ENCODE measurements at regions of chr4 and their contacts with region 1.

Region 1: GRCh38 chr4:7101692-7102515 is 34.0 kb upstream of the GRPEL1 start:
- DNase-seq: peak; percentile 56 to 66 (median 62)
- H3K4me3 ChIP-seq: peak overlapping the region; percentile 2 to 84 (median 21)
- H3K4me3 Mint-ChIP-seq: peak overlapping the region; percentile 88 to 95
- H3K27ac ChIP-seq: peak overlapping the region in 1 of 2 donors; percentile 9
- H3K27ac Mint-ChIP-seq: peak overlapping the region in 1 of 7 donors; percentile 64
- H3K4me1 ChIP-seq: peaks cover 22 to 26% of the 10 kb centered on the region in 2 donors
- H3K4me1 Mint-ChIP-seq: peaks cover 25% of the 10 kb centered on the region
- H3K27me3 ChIP-seq: peaks cover 0 to 21% of the 10 kb centered on the region in 2 donors
- H3K27me3 Mint-ChIP-seq: peaks cover 21 to 39% (median 35%) of the 10 kb centered on the region in 3 donors
- CTCF ChIP-seq: peak; percentile 83

Region 2: GRCh38 chr4:6574747-6575502 is 527.0 kb before region 1 on chr4 and contains the start of gene MAN2B2:
- intact Hi-C with region 1: loop called in 1 of 2 experiments (anchors 10 kb)
- DNase-seq: peak; percentile 59 to 66 (median 64)
- H3K4me3 ChIP-seq: peak within 1 kb of the TSS; percentile 85 to 97 (median 94)
- H3K4me3 Mint-ChIP-seq: peak within 1 kb of the TSS; percentile 87 to 92
- H3K27ac ChIP-seq: peak within 1 kb of the TSS; percentile 11 to 88
- H3K27ac Mint-ChIP-seq: peak within 1 kb of the TSS; percentile 25 to 90 (median 74)
- H3K4me1 ChIP-seq: peaks cover 13 to 18% of the 10 kb centered on the region in 2 donors
- H3K4me1 Mint-ChIP-seq: peaks cover 17% of the 10 kb centered on the region
- H3K27me3 ChIP-seq: peaks cover 0 to 24% of the 10 kb centered on the region in 2 donors
- H3K27me3 Mint-ChIP-seq: peaks cover 9 to 31% (median 23%) of the 10 kb centered on the region in 3 donors
- CTCF ChIP-seq: no peak
- polyA plus RNA-seq, gene MAN2B2: 9.6 to 28.4 (median 10.6) TPM

Region 3: DNA sequence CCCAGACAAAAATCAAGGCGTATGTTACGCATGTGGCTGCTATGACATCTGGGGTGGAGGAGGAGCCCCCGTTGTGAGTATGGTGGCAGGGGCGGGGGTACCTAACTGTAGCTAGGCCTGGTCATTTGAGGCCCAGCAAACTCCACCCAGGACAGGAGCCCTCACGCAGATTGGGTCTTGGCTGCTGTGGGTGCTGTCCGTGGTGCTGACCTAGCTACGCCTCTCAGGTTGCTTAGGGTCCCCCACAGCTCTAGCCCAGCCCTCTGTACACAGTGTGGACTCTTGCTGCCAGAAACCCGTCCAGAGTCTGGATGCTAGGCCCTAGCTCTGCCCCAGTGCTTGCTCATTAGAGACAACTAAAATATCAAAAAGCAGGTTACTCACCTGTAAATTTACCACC is 479.6 kb after region 1 on chr4:
- intact Hi-C with region 1: no loop called
- DNase-seq: no peak
- H3K4me3 ChIP-seq: no peak overlapping the region
- H3K4me3 Mint-ChIP-seq: no peak overlapping the region
- H3K27ac ChIP-seq: no peak overlapping the region
- H3K27ac Mint-ChIP-seq: no peak overlapping the region
- H3K4me1 ChIP-seq: no peaks in the 10 kb centered on the region
- H3K4me1 Mint-ChIP-seq: no peaks in the 10 kb centered on the region
- H3K27me3 ChIP-seq: no peaks in the 10 kb centered on the region
- H3K27me3 Mint-ChIP-seq: peaks cover 2 to 4% (median 3%) of the 10 kb centered on the region in 3 donors
- CTCF ChIP-seq: no peak